ENCODE measurements at regions of chr5 and their contacts with region 1.

Region 1: DNA sequence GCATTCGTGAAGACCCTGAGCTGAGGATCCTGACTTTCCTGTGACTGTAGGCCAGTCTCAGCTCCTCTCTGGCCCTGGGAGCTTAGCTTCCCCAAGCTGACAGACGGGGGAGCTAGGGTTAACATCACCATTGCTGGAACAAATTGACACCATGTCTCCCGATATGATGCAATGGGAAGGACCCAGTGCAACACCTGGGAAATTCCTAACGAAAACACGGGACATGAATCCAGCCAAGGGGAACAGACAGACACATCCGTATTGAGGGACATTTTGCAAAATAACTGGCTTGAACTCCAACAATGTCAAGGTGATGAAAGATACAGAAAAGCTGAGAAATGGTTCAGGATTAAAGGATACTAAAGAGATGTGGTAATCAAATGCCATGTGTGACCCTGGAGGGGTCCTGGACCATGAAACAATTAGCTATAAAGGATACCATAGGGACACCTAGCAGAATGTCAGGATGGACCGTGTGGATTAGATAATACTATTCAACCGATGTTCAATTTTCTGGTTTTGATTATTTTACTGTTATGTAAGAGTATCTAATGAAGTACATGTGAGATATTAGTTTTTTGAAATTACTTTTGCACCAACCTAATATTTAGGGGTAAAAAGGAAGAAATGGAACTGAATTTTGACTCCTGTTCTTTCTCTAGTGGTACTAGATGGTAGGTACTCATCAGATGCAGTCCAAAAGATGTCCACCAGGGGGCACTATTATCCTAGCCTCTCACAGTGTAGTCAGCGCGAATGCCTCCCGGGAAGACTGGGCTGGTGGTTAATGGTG is 52.7 kb downstream of the NDST1 start:
- DNase-seq: peak in 9 of 10 donors; percentile 71 to 97 (median 85)
- H3K4me3 ChIP-seq: no peak overlapping the region
- H3K27ac ChIP-seq: peak overlapping the region in 1 of 59 donors; percentile 36
- H3K27me3 ChIP-seq: no peaks in the 10 kb centered on the region
- CTCF ChIP-seq: peak; percentile 86 to 99 (median 97)

Region 2: GRCh38 chr5:150129813-150130492 is 430.6 kb before region 1 on chr5:
- intact Hi-C with region 1: no loop called
- DNase-seq: peak in 8 of 10 donors; percentile 39 to 79 (median 68)
- H3K4me3 ChIP-seq: peak overlapping the region in 30 of 59 donors; percentile 5 to 58 (median 29)
- H3K27ac ChIP-seq: peak overlapping the region in 26 of 59 donors; percentile 10 to 70 (median 47)
- H3K27me3 ChIP-seq: no peaks in the 10 kb centered on the region
- CTCF ChIP-seq: peak; percentile 75 to 97 (median 92)

Region 3: GRCh38 chr5:150656191-150657132 is 95.9 kb after region 1 on chr5:
- intact Hi-C with region 1: loop called (anchors 2 kb)
- DNase-seq: peak in 9 of 10 donors; percentile 49 to 84 (median 64)
- H3K4me3 ChIP-seq: peak overlapping the region; percentile 29 to 80 (median 65)
- H3K27ac ChIP-seq: peak overlapping the region in 36 of 59 donors; percentile 12 to 81 (median 58)
- H3K27me3 ChIP-seq: no peaks in the 10 kb centered on the region
- CTCF ChIP-seq: peak in 55 of 56 donors; percentile 44 to 96 (median 71)